ENCODE measurements at regions of chr12 and their contacts with region 1.

Region 1: DNA sequence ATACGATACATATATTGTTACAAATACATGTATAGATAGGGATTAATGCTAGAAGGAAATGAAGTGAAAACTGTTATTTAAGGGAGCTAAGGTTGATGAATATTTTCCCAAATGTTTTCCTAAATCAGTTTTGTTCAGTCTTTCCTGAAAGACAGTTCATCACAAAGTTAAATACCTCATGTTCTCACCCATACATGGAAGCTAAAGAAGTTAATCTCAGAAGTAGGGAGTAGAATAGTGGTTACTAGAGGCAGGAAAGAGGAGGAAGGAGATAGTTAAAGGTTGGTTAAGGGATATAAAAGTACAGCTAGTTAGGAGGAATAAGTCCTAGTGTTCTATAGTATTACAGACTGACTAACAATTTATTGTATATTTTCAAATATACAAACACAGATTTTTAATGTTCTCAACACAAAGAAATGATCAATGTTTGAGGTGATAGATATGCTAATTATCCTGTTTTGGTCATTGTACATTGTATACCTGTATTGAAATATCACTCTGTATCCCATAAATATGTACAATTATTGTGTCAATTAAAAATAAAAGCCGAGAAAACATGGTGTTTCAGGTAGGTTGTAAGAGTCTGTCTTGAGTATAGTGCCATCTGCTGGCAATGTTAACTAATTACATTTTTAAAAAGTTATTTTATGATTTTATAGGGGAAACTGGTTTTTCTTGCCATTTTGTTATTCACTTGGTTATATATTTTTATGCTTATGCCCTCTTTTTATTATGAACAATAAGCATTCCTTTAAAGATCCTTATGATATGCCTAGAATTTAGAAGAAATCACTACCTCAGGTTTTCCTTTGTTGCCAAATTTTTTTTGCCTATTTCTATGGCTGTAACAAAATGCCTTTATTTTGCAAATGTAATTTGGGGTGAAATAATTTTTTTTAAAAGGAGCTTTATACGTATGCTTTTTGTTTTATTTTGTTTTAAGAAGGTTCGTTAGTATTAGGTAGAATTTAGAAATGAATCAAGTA is 26.9 kb downstream of the ZDHHC17 start:
- DNase-seq: no peak
- ATAC-seq: peak; percentile 62
- H3K4me3 ChIP-seq: no peak overlapping the region
- H3K27ac ChIP-seq: no peak overlapping the region
- H3K4me1 ChIP-seq: no peaks in the 10 kb centered on the region
- H3K27me3 ChIP-seq: no peaks in the 10 kb centered on the region
- CTCF ChIP-seq: peak; percentile 31 to 53 (median 42); a peak in 4 of 6 replicates
- EP300 ChIP-seq: no peak
- POLR2A ChIP-seq: no peak
- RAD21 ChIP-seq: peak; percentile 83

Region 2: GRCh38 chr12:76633415-76633814 is 157.4 kb before region 1 on chr12:
- CTCF ChIA-PET with region 1: interaction called, 25 read pairs
- POLR2A ChIA-PET with region 1: no interaction called
- RAD21 ChIA-PET with region 1: interaction called, 21 read pairs
- SMC1A ChIA-PET with region 1: interaction called, 6 read pairs
- in situ Hi-C with region 1: no loop called
- intact Hi-C with region 1: no loop called
- DNase-seq: no peak
- ATAC-seq: no peak
- H3K4me3 ChIP-seq: no peak overlapping the region
- H3K27ac ChIP-seq: no peak overlapping the region
- H3K4me1 ChIP-seq: no peaks in the 10 kb centered on the region
- H3K27me3 ChIP-seq: no peaks in the 10 kb centered on the region
- CTCF ChIP-seq: no peak
- EP300 ChIP-seq: no peak
- POLR2A ChIP-seq: no peak
- RAD21 ChIP-seq: no peak

Region 3: GRCh38 chr12:76763743-76764675 is 26.8 kb before region 1 on chr12 and contains the start of gene ZDHHC17:
- CTCF ChIA-PET with region 1: interaction called, 16 read pairs
- POLR2A ChIA-PET with region 1: interaction called, 3 read pairs
- RAD21 ChIA-PET with region 1: interaction called, 15 read pairs
- SMC1A ChIA-PET with region 1: interaction called, 12 read pairs
- in situ Hi-C with region 1: no loop called
- intact Hi-C with region 1: no loop called
- DNase-seq: peak; percentile 66
- ATAC-seq: peak; percentile 93
- H3K4me3 ChIP-seq: peak within 1 kb of the TSS; percentile 85
- H3K27ac ChIP-seq: peak within 1 kb of the TSS; percentile 89
- H3K4me1 ChIP-seq: peaks cover 8% of the 10 kb centered on the region
- H3K27me3 ChIP-seq: no peaks in the 10 kb centered on the region
- CTCF ChIP-seq: no peak
- EP300 ChIP-seq: no peak
- POLR2A ChIP-seq: peak; percentile 98
- RAD21 ChIP-seq: no peak
- polyA plus RNA-seq, gene ZDHHC17: 4.3 to 4.9 TPM

Region 4: DNA sequence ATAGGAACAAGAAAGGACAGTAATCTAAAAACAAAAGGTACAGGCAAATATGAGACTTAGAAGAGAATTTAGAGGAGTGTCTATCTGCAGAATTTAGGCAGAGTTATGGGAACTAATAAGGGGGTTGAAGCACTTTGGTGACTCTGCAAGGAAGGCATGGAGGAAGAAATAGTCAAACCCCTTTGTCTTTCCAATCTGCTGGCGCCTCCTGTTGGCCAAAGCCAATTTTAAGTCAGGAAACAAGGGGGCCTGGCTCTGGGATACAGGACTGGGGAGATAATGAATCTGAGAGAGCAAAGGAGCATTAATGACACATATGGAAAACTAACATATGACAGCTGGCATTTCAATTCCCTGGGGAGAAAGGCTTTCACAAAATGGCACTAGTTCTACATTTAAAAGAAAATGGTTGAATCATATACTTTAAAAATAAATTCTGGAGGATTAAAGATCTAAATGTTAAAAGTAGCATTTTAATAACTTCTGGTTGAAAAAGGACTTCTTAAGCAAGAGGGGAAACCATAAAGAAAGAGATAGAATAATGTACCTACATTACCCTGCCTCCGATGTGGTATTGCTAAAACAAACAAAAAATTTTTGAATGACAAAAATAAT is 136.4 kb after region 1 on chr12:
- CTCF ChIA-PET with region 1: interaction called, 3 read pairs
- POLR2A ChIA-PET with region 1: no interaction called
- RAD21 ChIA-PET with region 1: no interaction called
- SMC1A ChIA-PET with region 1: interaction called, 3 read pairs
- in situ Hi-C with region 1: no loop called
- intact Hi-C with region 1: loop called (anchors 5 kb)
- DNase-seq: no peak
- ATAC-seq: peak; percentile 69
- H3K4me3 ChIP-seq: no peak overlapping the region
- H3K27ac ChIP-seq: no peak overlapping the region
- H3K4me1 ChIP-seq: no peaks in the 10 kb centered on the region
- H3K27me3 ChIP-seq: no peaks in the 10 kb centered on the region; a peak in 1 of 4 replicates
- CTCF ChIP-seq: peak; percentile 51 to 56 (median 54)
- EP300 ChIP-seq: no peak
- POLR2A ChIP-seq: no peak
- RAD21 ChIP-seq: peak; percentile 74

Measured in GM12878 (cell line).